A549 (cell line): ENCODE measurements at regions of chr2 and their contacts with region 1.

Region 1: DNA sequence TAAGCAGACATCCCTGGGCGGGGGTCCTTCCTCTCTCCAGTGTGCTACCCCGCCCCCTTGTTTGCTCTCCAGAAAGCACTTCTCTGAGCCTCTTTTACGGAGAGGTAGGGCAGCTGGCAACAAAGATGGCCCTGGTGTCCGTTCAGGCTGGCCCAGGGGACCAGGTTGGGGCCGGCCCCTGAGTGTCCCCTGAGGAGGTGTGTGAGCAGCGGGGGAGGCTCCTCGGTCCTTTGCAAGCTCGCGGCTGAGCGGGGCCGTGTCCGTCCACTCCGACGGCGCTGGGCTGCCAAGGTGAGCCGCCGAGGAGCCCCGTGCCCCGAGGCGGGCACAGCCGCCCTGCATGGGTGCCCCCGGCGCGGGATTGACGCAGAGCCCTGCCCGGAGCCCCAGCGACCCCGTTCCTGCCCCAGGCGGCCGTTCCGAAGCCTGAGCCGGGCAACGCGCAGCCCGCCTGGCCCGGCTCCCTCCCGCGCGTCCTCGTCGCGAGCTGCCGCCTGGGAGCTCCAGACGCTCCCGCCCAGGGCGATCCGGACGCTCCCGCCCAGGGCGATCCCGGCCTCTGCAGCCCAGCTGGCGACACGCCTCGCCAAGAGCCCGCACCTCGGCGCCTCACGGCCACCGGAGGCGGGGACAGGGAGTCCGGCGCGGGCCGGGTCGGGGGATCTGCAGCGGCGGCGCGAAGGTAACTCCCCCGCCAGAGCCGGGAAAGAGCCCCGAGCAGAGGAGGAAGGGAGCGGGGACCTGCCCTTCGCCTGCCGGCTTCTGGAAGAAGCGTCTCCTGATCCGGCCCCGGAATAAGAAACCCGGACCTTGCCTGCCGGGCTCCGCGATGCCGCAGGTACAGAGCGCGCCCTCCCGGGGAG is at the start of gene PROKR1:
- DNase-seq: peak; percentile 7 to 22
- ATAC-seq: peak; percentile 74 to 85
- H3K4me3 ChIP-seq: peak within 1 kb of the TSS; percentile 57
- H3K27ac ChIP-seq: peak within 1 kb of the TSS; percentile 11 to 66; a peak in 4 of 6 replicates
- H3K4me1 ChIP-seq: peaks cover 9% of the 10 kb centered on the region; the same call in 1 of the 3 replicates
- CTCF ChIP-seq: no peak
- EP300 ChIP-seq: no peak
- POLR2A ChIP-seq: no peak
- RAD21 ChIP-seq: no peak
- polyA plus RNA-seq, gene PROKR1: not detected in 2 replicates

Region 2: DNA sequence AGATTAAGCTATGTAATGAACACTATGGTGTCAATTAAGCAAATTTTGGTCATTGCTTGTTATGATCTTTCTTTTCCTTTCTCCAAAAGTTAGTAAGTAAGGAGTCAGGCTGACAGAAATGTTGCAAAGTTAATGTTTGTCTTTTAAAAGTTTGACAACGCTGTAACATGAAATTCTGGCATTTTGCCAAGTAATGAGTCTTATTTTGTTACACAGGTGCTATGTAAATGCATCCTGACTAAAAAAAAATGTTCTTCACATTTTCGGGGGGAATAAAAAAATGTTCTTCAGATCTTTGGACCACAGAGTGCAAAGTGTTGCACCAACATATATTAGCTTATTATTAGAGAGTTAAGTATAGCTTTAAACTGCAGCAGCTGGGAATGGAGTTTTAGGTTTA is 54.7 kb before region 1 on chr2:
- CTCF ChIA-PET with region 1: no interaction called
- POLR2A ChIA-PET with region 1: no interaction called
- DNase-seq: no peak
- ATAC-seq: no peak
- H3K4me3 ChIP-seq: no peak overlapping the region
- H3K27ac ChIP-seq: no peak overlapping the region
- H3K4me1 ChIP-seq: no peaks in the 10 kb centered on the region
- CTCF ChIP-seq: no peak
- EP300 ChIP-seq: no peak
- POLR2A ChIP-seq: no peak
- RAD21 ChIP-seq: no peak

Region 3: DNA sequence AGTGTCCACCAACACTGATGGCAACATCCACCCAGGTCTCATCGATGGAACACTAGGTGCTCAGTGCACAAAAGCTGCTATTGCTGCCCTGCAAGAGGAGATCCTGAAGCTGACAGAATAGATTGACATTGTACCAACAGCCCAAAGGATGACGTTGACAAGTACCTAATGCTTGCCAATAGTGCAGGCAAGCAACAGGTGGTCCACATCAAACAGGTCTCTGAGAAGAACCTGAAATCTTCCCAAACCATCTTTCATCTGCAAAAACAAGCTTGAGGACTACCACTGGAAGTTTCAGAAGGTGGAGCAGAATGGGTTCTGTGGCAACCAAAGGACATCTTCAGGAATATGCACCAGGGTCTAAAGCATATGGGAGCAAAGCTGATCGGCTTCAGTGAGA is 15.6 kb before region 1 on chr2:
- CTCF ChIA-PET with region 1: interaction called, 15 read pairs
- POLR2A ChIA-PET with region 1: no interaction called
- DNase-seq: no peak
- ATAC-seq: no peak
- H3K4me3 ChIP-seq: no peak overlapping the region
- H3K27ac ChIP-seq: no peak overlapping the region
- H3K4me1 ChIP-seq: no peaks in the 10 kb centered on the region
- CTCF ChIP-seq: no peak
- EP300 ChIP-seq: no peak
- POLR2A ChIP-seq: no peak
- RAD21 ChIP-seq: no peak